Head of caudate nucleus (tissue), 42 donors: ENCODE measurements at regions of chr11 and their contacts with region 1.

Region 1: DNA sequence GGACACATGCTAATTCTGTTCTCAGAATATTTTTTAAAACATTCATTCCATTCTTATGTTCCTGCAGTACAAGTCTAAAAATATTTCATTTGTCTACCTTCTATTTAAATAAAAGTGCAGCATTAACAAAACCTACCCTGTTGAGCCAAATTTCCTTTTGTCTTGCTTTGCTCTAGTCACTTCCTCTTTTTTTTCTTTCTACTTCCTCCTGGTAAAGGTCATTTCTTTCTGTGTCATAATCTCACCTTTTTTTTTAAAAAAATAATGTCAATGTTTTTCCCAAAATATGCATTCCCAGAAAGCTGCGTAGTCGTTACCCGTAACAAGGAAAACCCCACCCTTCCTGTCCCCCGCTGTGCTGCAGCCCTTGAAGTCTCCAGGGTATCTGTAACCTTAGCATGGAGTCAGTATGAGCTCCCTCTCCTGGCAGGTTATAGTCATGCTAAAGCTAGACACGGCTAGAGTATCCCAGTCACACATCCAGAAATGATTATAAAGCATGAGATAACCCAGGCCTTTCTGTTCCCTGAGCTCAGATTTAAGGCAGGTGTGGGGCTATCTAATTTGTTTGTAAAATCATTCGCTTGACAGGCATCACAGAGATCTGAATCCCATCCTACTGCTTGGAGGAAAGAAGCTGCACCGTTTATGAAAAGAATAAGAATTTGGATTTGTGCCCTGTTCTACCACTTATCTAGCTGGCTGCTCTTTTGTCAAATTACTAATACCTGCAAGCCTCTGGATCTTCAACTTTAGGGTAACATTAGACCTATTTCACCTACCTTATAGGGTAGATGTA is 51.1 kb upstream of the EED start:
- DNase-seq: peak; percentile 14 to 90 (median 70)

Region 2: GRCh38 chr11:86041975-86042378 is 151.5 kb before region 1 on chr11:
- intact Hi-C with region 1: loop called (anchors 5 kb)
- DNase-seq: peak in 30 of 42 donors; percentile 12 to 87 (median 66)

Region 3: GRCh38 chr11:86068951-86069407 is 124.5 kb before region 1 on chr11 and contains the start of gene PICALM:
- intact Hi-C with region 1: loop called (anchors 2 kb)
- DNase-seq: peak; percentile 94 to 100 (median 98)

Region 4: DNA sequence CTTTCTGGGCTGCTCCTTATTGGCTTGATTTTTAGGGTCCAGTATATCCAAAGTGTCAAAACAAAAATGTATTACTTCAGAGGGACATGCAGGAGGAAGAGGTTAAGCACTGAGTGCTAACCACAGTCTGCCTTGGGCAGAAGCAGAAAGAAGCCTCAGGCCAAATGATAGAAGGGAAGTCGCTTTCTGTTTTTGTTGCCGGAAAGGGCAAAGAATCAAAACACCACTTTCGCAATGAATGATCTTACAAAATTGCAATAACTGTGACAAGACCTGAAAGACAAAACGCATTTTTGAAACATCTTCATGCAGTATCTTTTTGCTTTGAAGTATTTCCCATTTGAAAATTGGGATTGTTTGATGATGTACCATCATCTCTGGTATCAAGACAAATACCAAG is 54.5 kb before region 1 on chr11:
- intact Hi-C with region 1: no loop called
- DNase-seq: peak in 1 of 42 donors; percentile 8

Region 5: DNA sequence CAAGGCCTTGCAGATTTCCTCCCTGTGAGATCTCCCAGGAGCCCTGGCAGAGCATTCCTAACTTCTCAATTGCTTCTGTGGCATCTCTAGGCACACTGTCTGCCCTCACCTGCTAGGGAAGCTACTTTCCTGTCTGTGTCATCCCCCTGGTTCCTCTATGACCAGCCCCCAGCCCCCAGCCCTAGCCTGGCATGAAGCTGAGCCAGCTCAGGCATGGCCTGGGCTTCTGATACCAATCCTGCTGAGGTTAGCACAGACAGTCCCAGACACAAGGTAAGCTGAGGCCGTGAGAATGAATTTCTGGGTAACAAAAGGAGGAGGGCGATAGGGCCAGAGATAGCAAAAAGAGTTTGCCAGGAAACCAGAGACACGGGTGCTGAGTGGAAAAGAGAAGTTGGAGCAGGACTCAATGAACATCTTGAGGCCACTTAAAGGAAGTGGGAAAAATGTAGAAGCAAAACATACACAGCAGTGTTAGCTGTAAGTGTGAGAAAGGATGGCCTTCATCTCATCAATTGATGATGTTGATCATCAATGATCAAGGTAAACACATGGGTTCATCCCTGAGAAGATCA is 37.0 kb before region 1 on chr11:
- intact Hi-C with region 1: loop called (anchors 5 kb)
- DNase-seq: peak in 1 of 42 donors; percentile 12